Ovary (tissue), 10 donors: ENCODE measurements at regions of chr12 and their contacts with region 1.

Region 1: GRCh38 chr12:8823565-8824300 is 1.3 kb downstream of the A2ML1 start:
- DNase-seq: peak in 4 of 5 donors; percentile 39 to 56 (median 45)
- H3K4me3 ChIP-seq: no peak overlapping the region
- H3K27ac ChIP-seq: no peak overlapping the region
- H3K4me1 ChIP-seq: no peaks in the 10 kb centered on the region
- H3K27me3 ChIP-seq: no peaks in the 10 kb centered on the region
- CTCF ChIP-seq: peak in 2 of 3 donors; percentile 45 to 76
- EP300 ChIP-seq: no peak
- POLR2A ChIP-seq: no peak

Region 2: DNA sequence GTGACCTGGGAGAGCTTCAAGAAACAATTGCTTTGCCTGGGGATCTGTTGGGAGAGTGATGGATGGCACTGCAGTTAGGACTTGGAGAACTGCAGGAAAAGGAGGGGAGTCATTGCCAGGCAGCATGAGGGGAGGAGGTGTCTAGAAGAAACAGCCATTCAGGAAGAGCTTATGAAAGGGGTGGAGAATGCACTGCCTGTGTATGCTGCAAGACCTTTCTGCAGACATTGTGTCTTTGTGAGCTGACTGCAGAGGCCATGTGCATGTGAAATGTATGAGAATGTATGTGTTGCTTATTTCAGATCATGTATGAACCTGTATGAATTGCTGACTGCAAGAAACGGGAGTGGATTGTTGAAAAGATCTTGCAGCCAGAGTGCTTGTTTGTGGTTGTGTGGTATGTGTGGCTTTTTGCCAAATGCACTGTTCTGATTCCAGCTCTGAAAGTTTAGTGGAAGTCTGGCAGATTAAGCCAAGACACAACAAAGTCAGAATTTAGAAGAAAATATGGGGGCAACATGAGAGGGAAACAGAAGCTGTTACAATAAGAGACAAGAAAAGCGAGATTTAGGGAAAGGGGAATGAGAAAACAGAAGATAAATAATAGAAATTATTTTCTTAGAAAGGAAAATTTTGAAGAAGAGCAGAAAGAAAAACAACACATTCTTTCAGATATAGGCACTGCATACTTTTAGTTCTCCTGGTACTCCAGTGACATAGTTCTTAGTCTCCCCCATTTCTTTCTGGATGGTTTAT is 135.7 kb before region 1 on chr12:
- intact Hi-C with region 1: loop called in 2 of 4 experiments (anchors 10 kb)
- DNase-seq: peak; percentile 49 to 65 (median 52)
- H3K4me3 ChIP-seq: no peak overlapping the region
- H3K27ac ChIP-seq: no peak overlapping the region
- H3K4me1 ChIP-seq: no peaks in the 10 kb centered on the region
- H3K27me3 ChIP-seq: no peaks in the 10 kb centered on the region
- CTCF ChIP-seq: no peak
- EP300 ChIP-seq: no peak
- POLR2A ChIP-seq: no peak

Region 3: DNA sequence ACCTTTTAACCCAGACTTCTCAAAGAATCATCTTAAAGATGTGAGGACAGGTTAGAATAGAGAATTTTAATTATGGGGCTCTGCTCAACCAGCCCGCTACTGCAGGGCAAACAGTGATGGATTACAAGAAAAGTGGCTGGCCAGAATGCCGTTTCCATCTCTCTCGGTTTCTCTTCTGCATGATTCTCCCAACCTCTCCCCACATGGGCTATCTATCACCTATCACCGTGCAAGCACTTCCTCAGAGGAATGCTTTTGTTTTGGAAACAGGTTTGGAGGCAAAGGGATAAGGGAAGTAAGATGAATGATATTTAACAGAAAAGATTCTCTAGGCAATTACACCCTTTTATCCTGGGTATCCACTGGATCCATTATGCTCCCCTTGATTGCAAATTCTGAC is 53.2 kb after region 1 on chr12:
- intact Hi-C with region 1: no loop called
- DNase-seq: no peak
- H3K4me3 ChIP-seq: no peak overlapping the region
- H3K27ac ChIP-seq: no peak overlapping the region
- H3K4me1 ChIP-seq: no peaks in the 10 kb centered on the region
- H3K27me3 ChIP-seq: no peaks in the 10 kb centered on the region
- CTCF ChIP-seq: no peak
- EP300 ChIP-seq: no peak
- POLR2A ChIP-seq: no peak